Heart left ventricle (tissue), 16 donors: ENCODE measurements at regions of chr9 and their contacts with region 1.

Region 1: DNA sequence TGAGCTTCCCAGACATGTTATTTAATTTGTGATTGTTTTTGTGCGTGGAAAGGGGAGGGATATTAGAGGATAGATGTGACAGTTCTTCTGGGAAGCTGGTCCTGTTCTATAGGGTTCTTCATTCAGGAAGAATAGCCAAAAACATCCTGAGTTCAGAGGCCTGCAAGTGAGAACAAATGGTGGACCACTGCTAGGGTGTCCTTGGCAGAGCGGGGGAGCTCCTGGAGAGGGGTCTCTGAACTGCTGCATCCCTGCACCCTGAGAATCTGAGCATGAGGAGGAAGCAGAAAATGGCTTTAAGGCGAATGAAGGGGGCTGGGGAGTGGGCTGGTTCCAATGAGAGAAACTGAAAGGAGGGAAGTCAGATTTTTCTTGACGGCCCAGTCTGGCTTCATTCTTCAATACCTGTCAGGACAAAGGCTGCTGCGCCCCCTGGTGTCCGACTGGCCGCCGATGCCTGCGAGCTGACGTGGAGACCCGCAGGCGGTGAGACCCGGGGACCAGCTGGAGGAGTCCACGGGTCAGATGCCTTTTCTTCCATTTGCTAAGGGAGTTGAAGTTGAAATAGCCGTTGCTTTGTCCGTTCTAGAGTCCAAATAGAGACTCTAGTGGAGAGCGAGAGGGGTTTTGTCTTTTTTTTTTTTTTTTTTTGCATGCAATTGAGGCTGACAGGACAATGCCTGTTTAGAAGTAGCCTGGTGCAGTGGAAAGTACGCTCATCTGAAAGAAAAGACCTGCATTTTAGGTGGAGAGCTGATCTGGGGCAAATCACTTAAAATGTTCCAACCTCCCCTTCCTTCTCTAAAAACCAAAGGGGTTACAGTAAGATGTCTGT is 39.5 kb upstream of the NFIB start:
- DNase-seq: peak; percentile 92 to 96 (median 94)
- ATAC-seq: peak; percentile 57 to 75 (median 72)
- H3K4me3 ChIP-seq: peak overlapping the region in 10 of 12 donors; percentile 4 to 48 (median 24)
- H3K27ac ChIP-seq: peak overlapping the region; percentile 61 to 94 (median 87)
- H3K4me1 ChIP-seq: peaks cover 4 to 69% (median 38%) of the 10 kb centered on the region in 12 donors
- H3K27me3 ChIP-seq: peaks cover 0 to 13% (median 0%) of the 10 kb centered on the region in 9 donors
- CTCF ChIP-seq: peak; percentile 79 to 96 (median 92)
- POLR2A ChIP-seq: no peak

Region 2: DNA sequence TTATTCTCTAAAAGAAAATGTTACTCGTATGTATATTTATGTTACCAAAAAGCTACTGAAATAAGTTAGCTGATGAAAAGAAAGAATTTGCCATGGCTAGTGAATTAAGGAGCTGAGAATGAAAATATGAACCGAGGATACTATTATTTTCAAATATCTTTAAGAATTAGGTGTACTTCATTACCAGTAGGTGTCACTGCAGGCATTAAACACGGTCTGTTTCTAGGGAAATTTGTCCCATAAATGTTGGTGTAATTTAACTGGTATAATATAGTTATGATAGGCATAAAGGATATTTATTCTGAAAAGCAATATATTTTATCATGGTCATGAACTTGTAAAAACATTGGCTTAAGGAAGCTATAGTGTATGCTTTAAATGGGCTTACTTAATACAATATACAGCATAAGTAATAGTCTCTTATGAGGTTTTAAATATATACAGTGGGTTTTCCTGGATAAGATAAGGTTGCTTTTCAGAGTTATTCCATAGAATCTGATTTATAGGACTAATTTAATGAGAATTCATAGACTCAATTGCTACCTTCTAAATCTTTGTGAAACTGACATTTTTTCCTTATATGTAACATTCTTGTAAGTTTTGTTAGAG is 1001.6 kb before region 1 on chr9:
- intact Hi-C with region 1: loop called in 3 of 10 experiments (anchors 5 to 10 kb)
- DNase-seq: peak in 1 of 5 donors; percentile 24
- ATAC-seq: peak in 2 of 4 donors; percentile 46 to 47
- H3K4me3 ChIP-seq: no peak overlapping the region
- H3K27ac ChIP-seq: no peak overlapping the region
- H3K4me1 ChIP-seq: no peaks in the 10 kb centered on the region
- H3K27me3 ChIP-seq: no peaks in the 10 kb centered on the region
- CTCF ChIP-seq: peak; percentile 49 to 82 (median 68)
- POLR2A ChIP-seq: no peak

Region 3: GRCh38 chr9:13443346-13444244 is 909.8 kb before region 1 on chr9:
- intact Hi-C with region 1: loop called in 6 of 10 experiments (anchors 5 kb)
- DNase-seq: peak in 1 of 5 donors; percentile 31
- ATAC-seq: peak in 2 of 4 donors; percentile 21 to 24
- H3K4me3 ChIP-seq: peak overlapping the region in 8 of 12 donors; percentile 2 to 35 (median 14)
- H3K27ac ChIP-seq: peak overlapping the region in 8 of 12 donors; percentile 3 to 72 (median 28)
- H3K4me1 ChIP-seq: peaks cover 1 to 60% (median 36%) of the 10 kb centered on the region in 12 donors
- H3K27me3 ChIP-seq: no peaks in the 10 kb centered on the region
- CTCF ChIP-seq: no peak
- POLR2A ChIP-seq: no peak

Region 4: DNA sequence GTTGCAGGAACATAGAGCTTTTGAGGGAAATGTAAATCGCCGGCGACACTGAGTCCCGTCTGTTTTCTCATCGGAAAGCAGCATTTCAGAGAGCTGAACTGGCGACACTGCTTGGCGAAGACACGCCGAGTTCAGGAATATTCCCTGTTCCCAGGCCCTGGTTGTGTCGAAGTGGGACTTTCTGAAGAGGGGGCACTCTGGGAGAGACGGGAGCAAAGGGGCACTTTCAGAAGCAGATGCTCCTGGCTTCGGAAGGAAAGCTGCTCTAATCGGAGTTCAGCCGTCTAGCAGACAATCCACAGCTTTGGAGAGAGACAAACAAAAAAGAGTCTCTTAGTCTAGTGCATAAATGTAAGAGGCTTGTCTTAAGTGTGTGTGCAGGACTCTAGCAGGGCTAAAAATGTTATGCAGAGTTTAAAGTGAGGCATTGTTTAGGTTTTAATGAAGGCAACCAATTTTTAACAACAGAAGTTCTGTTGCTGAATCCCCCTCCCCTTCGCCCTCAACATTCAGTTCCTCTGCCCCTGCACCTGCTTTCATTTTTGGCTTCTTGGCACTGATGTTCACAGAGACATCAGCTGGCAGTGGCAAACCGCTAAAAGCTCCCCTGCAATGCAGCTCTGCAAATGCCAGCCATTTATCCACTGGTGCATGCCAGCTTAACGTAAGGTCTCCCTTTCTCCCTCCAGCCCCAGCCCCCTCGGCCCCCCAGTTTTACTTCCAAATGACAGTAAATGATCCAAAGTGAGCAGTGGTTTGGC is 784.4 kb before region 1 on chr9:
- intact Hi-C with region 1: loop called in 2 of 10 experiments (anchors 10 kb)
- DNase-seq: peak in 3 of 5 donors; percentile 30 to 55 (median 34)
- ATAC-seq: peak; percentile 25 to 49 (median 29)
- H3K4me3 ChIP-seq: peak overlapping the region in 10 of 12 donors; percentile 21 to 46 (median 35)
- H3K27ac ChIP-seq: peak overlapping the region; percentile 53 to 92 (median 82)
- H3K4me1 ChIP-seq: peaks cover 0 to 46% (median 31%) of the 10 kb centered on the region in 12 donors
- H3K27me3 ChIP-seq: no peaks in the 10 kb centered on the region
- CTCF ChIP-seq: no peak
- POLR2A ChIP-seq: no peak

Region 5: GRCh38 chr9:13863112-13863511 is 490.3 kb before region 1 on chr9:
- intact Hi-C with region 1: loop called in 1 of 10 experiments (anchors 5 kb)
- DNase-seq: peak; percentile 63 to 80 (median 77)
- ATAC-seq: peak; percentile 85 to 97 (median 95)
- H3K4me3 ChIP-seq: no peak overlapping the region
- H3K27ac ChIP-seq: peak overlapping the region; percentile 12 to 56 (median 38)
- H3K4me1 ChIP-seq: peaks cover 0 to 39% (median 21%) of the 10 kb centered on the region in 12 donors
- H3K27me3 ChIP-seq: no peaks in the 10 kb centered on the region
- CTCF ChIP-seq: no peak
- POLR2A ChIP-seq: no peak

Region 6: DNA sequence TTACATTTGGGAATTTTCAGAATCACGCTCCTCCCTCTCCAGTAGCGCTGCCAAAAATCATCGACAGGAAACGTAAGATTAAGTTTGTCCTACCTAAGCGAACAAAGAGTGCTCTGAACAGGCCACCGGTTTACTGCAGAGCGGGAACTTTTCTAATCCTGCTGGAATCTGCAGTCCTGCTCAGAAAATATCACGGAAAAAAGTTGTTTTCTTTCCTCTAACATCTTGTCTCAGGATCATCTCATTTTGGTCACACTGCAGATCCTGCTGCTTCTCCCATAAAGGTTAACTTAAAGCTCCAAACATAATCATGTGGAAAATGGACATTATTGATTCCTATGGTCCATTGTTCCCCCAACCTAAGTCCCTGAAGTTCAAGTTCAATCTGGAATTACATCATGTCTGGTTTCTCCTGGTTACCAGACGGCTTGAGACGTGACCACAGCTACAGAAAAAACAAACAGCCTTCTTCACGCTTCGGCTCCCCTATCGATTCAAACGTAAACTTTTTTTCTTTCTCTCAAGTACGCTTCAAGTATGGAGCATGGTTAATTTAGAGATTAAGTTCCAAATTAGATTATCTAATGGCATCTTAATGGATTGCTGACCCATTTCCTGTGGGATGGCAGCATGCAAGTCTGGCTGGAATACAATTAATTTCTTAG is 257.0 kb before region 1 on chr9:
- intact Hi-C with region 1: loop called in 3 of 10 experiments (anchors 5 to 10 kb)
- DNase-seq: peak in 4 of 5 donors; percentile 40 to 53 (median 42)
- ATAC-seq: peak; percentile 81 to 87 (median 84)
- H3K4me3 ChIP-seq: peak overlapping the region in 10 of 12 donors; percentile 9 to 48 (median 32)
- H3K27ac ChIP-seq: peak overlapping the region; percentile 39 to 90 (median 82)
- H3K4me1 ChIP-seq: peaks cover 0 to 71% (median 49%) of the 10 kb centered on the region in 12 donors
- H3K27me3 ChIP-seq: no peaks in the 10 kb centered on the region
- CTCF ChIP-seq: no peak
- POLR2A ChIP-seq: no peak

Region 7: DNA sequence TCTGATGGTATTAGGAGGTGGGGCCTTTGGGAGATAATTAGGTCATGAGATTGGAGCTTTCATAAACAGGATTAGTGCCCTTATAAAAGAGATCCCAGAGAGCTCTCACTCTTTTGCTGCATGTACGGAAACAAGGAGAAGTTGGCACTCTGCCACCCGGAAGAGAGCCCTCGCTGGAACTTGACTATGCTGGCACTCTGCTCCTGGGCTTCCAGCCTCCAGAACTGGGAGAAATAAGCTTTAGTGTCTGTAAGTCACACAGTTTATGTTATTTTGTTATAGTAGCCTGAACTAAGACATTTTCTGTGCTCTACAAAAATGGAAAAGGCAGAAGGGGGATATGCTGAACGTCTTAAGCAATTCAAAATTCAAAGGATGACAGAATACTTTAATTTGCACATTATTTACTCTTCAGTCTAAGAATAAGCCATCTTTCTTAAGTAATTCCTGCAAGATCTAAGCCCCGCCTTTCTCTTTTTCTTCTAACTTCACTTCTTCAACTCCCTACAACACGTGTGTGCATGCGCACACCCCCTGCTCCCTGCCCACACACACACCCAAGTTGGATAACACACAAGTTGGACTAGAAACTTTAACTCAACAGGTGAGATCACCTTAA is 56.8 kb before region 1 on chr9:
- intact Hi-C with region 1: no loop called
- DNase-seq: peak in 4 of 5 donors; percentile 46 to 67 (median 58)
- ATAC-seq: peak in 1 of 4 donors; percentile 40
- H3K4me3 ChIP-seq: no peak overlapping the region
- H3K27ac ChIP-seq: peak overlapping the region in 7 of 12 donors; percentile 13 to 62 (median 18)
- H3K4me1 ChIP-seq: peaks cover 3 to 92% (median 60%) of the 10 kb centered on the region in 12 donors
- H3K27me3 ChIP-seq: no peaks in the 10 kb centered on the region
- CTCF ChIP-seq: no peak
- POLR2A ChIP-seq: no peak

Region 8: DNA sequence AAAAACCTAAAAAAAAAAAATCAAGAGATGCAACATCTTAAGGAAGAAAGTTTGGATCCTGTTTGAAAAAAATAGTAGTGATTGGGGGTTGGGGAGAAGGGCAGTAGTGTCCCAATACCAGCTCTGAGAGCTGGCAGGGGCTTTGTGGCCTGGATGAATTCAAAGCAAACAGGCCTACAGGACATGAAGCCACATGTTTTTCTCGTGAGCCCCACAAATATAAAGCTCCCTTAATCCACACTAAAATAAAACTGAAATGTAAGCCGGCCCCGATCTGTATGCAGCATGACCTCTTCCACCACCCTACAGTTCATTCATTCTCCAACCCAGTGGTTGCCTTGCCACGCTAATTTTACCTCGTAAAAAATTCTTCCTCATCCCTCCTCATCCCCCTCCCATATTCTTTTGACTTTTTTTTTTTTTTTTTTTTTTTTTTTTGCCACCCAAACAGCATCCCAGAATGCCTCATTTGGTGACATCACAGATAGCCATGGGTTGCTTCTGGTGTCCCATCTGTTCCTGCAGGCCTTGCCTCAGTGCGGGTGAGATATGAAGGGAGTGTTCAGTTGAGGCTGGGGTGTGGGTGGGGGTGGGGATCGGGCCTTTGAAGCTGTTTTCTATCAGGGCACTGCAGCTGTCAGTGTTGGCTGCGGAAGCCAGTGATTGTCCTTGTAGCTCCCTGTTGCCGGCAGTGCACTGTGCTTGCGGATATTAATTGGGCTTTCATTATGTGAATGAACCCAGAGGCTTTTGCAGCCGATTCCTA is 42.1 kb after region 1 on chr9:
- intact Hi-C with region 1: loop called in 2 of 10 experiments (anchors 5 kb)
- DNase-seq: peak; percentile 43 to 59 (median 54)
- ATAC-seq: peak; percentile 75 to 86 (median 78)
- H3K4me3 ChIP-seq: peak overlapping the region in 7 of 12 donors; percentile 9 to 38 (median 20)
- H3K27ac ChIP-seq: peak overlapping the region in 8 of 12 donors; percentile 30 to 68 (median 58)
- H3K4me1 ChIP-seq: peaks cover 0 to 14% (median 6%) of the 10 kb centered on the region in 12 donors
- H3K27me3 ChIP-seq: no peaks in the 10 kb centered on the region
- CTCF ChIP-seq: no peak
- POLR2A ChIP-seq: no peak